Heart right ventricle (tissue), 16 donors: ENCODE measurements at regions of chr21 and their contacts with region 1.

Region 1: GRCh38 chr21:38159355-38159754 is 97.4 kb upstream of the KCNJ15 start:
- DNase-seq: peak; percentile 11 to 62
- ATAC-seq: peak in 4 of 8 donors; percentile 33 to 74 (median 48)
- H3K4me3 ChIP-seq: no peak overlapping the region
- H3K27ac ChIP-seq: no peak overlapping the region
- H3K4me1 ChIP-seq: peaks cover 0 to 5% (median 0%) of the 10 kb centered on the region in 9 donors
- H3K27me3 ChIP-seq: peaks cover 0 to 33% (median 15%) of the 10 kb centered on the region in 7 donors
- CTCF ChIP-seq: peak; percentile 68 to 86 (median 81)

Region 2: GRCh38 chr21:38095220-38095619 is 64.1 kb before region 1 on chr21:
- intact Hi-C with region 1: no loop called
- DNase-seq: no peak
- ATAC-seq: no peak
- H3K4me3 ChIP-seq: no peak overlapping the region
- H3K27ac ChIP-seq: no peak overlapping the region
- H3K4me1 ChIP-seq: no peaks in the 10 kb centered on the region
- H3K27me3 ChIP-seq: peaks cover 0 to 8% (median 0%) of the 10 kb centered on the region in 7 donors
- CTCF ChIP-seq: no peak

Region 3: DNA sequence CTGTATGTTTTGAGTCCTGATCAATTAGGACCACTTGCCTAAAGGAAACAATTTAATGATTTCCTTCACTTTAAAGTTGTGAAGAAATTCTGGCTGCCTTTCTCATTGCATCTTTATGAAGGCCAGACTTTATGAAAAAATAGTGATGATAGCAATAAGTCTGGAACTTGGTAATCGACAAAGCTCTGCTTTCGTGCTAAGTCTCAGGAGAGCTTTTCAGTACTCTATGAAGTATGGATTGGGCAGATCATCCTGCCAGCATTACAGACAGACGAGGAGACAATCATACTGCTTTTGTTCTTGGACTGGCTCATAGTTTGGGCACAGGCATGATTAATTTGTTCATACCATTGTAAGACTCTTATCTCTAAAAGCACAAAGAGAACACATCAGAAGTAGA is 52.0 kb after region 1 on chr21:
- intact Hi-C with region 1: loop called in 4 of 10 experiments (anchors 5 kb)
- DNase-seq: no peak
- ATAC-seq: no peak
- H3K4me3 ChIP-seq: no peak overlapping the region
- H3K27ac ChIP-seq: no peak overlapping the region
- H3K4me1 ChIP-seq: no peaks in the 10 kb centered on the region
- H3K27me3 ChIP-seq: peaks cover 0 to 26% (median 9%) of the 10 kb centered on the region in 7 donors
- CTCF ChIP-seq: no peak

Region 4: DNA sequence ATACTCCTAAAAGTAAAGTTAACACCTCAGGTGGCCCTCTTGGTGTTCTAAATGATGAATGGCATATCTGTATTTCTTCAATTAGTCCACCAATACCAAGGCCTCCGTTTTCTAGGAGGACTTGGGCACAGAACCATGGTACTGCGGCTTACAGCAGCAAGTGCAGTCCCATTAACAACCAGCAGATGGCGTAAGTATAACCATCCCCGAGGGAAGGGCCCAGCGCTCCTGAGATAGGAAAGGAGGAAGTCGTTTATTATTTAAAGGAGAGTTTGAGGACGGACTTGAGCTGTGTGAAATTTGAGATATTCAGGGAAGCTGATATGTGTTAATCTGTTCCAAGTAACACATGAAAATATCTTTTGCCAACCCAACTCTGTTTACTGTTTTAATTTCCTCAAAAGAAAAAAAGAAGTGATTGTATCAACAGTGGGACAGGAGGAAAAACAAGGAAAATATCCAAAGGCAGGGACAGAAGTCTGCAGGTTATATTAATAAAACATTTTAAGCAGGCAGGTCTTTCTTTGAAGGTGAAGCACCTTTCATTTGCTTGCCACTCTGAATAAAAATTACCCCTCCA is 59.8 kb after region 1 on chr21:
- intact Hi-C with region 1: loop called in 5 of 10 experiments (anchors 2 to 5 kb)
- DNase-seq: peak; percentile 20 to 72
- ATAC-seq: peak; percentile 64 to 89 (median 78)
- H3K4me3 ChIP-seq: no peak overlapping the region
- H3K27ac ChIP-seq: peak overlapping the region in 1 of 10 donors; percentile 84
- H3K4me1 ChIP-seq: peaks cover 0 to 20% (median 0%) of the 10 kb centered on the region in 9 donors
- H3K27me3 ChIP-seq: peaks cover 0 to 4% (median 0%) of the 10 kb centered on the region in 7 donors
- CTCF ChIP-seq: peak; percentile 87 to 98 (median 96)

Region 5: DNA sequence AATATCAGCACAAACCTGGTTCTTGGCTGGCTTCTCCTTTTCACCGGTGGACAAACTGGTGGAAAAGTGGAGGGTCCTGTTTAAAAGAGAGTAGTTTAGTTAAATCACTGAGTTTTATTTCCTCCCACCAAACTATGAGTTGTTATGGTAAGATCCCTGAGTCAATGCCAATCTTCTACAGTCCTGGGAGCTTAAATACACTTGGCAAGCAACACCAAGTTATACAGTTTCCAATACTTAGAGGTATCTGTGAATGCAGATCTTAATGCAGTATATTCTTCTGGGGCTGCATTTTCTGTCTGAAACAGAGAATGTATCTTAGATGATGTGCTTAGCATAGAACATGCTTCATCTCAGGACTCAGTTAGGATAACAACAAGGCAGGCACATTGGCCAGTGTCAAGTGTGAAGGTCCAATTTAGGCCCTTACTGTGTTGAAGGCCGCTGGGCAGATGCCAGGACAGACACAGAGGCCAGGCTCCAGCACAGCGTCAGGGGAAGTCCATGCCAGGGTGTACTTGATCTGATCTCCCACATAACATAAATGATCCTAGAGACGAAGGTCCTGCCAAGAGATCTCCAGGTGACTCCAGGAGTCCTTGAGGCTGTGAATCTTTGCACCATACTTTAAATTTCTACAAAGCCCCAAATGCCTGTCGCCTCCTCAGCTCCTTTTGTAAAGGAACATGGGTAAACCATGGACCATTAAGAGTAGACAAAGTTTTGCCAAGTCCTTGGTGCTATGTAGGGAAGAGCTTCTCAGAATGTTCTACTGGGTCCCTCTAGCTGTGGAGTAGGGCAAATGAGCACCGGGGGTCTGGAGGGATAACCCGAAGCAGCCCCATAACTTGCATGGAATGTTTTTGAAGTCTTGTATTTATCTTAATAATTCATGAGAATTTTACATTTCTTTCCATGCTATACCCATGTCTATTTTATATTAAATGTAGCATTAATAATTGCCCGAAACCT is 174.2 kb after region 1 on chr21:
- intact Hi-C with region 1: no loop called
- DNase-seq: peak in 1 of 2 donors; percentile 40
- ATAC-seq: peak in 6 of 8 donors; percentile 29 to 55 (median 51)
- H3K4me3 ChIP-seq: no peak overlapping the region
- H3K27ac ChIP-seq: no peak overlapping the region
- H3K4me1 ChIP-seq: peaks cover 0 to 4% (median 0%) of the 10 kb centered on the region in 9 donors
- H3K27me3 ChIP-seq: no peaks in the 10 kb centered on the region
- CTCF ChIP-seq: peak in 6 of 9 donors; percentile 22 to 46 (median 40)